Mammary epithelial cell (primary cell): ENCODE measurements at regions of chr4 and their contacts with region 1.

Region 1: GRCh38 chr4:125105561-125105960 is 209.2 kb upstream of the FAT4 start:
- DNase-seq: no peak
- H3K4me3 ChIP-seq: no peak overlapping the region
- H3K27ac ChIP-seq: no peak overlapping the region
- H3K4me1 ChIP-seq: peaks cover 5% of the 10 kb centered on the region
- H3K27me3 ChIP-seq: no peaks in the 10 kb centered on the region
- CTCF ChIP-seq: no peak

Region 2: DNA sequence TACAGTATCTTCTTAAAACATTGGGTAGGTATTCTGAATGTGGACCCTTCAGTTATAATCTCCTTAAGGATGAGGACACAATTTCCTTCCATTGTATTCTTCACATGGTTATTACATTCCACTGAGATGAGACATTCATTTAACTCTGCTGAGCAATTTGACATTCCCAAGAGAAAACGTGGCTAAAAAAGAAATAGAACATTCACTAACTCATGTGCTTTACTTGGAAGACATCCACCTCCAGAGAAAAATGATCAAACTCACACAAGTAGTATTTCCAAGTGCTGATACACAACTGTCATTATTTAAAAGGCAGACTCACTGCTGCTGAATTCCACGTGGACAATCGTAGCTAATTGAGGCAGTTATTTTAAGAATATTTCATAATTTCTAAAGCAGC is 165.2 kb before region 1 on chr4:
- CTCF ChIA-PET with region 1: no interaction called
- dilution Hi-C with region 1: no loop called
- in situ Hi-C with region 1: no loop called
- intact Hi-C with region 1: loop called (anchors 1 kb)
- DNase-seq: peak; percentile 92
- H3K4me3 ChIP-seq: no peak overlapping the region
- H3K27ac ChIP-seq: peak overlapping the region; percentile 71
- H3K4me1 ChIP-seq: peaks cover 25% of the 10 kb centered on the region
- H3K27me3 ChIP-seq: no peaks in the 10 kb centered on the region
- CTCF ChIP-seq: no peak

Region 3: GRCh38 chr4:125131893-125132680 is 26.5 kb after region 1 on chr4:
- CTCF ChIA-PET with region 1: no interaction called
- dilution Hi-C with region 1: no loop called
- in situ Hi-C with region 1: no loop called
- intact Hi-C with region 1: no loop called
- DNase-seq: no peak
- H3K4me3 ChIP-seq: no peak overlapping the region
- H3K27ac ChIP-seq: no peak overlapping the region
- H3K4me1 ChIP-seq: no peaks in the 10 kb centered on the region
- H3K27me3 ChIP-seq: no peaks in the 10 kb centered on the region
- CTCF ChIP-seq: no peak

Region 4: DNA sequence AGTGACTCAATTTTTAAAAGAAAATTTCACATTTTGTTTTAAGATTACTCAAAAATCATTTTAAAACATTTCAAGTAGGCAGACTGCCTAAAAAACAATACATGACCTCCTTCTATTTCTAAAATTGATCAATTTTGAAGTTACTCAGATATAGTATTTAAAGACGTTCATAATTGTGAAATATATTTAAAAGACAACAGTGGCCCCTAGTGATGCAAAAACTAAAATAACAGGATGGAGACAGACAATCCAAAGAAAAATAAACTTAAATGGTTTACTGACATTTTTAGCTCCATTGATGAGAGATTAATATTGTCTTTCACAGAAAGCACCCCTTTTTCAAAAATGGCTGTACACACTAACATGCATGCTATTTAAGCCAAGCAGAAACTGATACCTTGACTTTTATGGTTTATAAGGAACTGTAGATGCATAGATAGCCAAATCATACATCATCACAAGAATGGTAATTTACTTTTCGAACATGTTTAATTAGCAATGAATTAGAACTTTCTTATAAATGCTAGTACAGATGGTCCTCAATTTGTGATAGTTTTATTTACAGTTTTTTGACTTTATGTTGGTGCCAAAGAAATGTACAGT is 139.4 kb after region 1 on chr4:
- CTCF ChIA-PET with region 1: no interaction called
- dilution Hi-C with region 1: no loop called
- in situ Hi-C with region 1: no loop called
- intact Hi-C with region 1: loop called (anchors 10 kb)
- DNase-seq: peak; percentile 14
- H3K4me3 ChIP-seq: no peak overlapping the region
- H3K27ac ChIP-seq: no peak overlapping the region
- H3K4me1 ChIP-seq: peaks cover 7% of the 10 kb centered on the region
- H3K27me3 ChIP-seq: no peaks in the 10 kb centered on the region
- CTCF ChIP-seq: peak; percentile 27 to 36